ENCODE measurements at regions of chr2 and their contacts with region 1.

Region 1: GRCh38 chr2:153519257-153519875 is 40.8 kb upstream of the RPRM start:
- DNase-seq: peak in 7 of 10 donors; percentile 28 to 79 (median 52)
- H3K4me3 ChIP-seq: no peak overlapping the region
- H3K27ac ChIP-seq: no peak overlapping the region
- H3K27me3 ChIP-seq: peaks cover 0 to 8% (median 0%) of the 10 kb centered on the region in 45 donors
- CTCF ChIP-seq: peak; percentile 78 to 100 (median 92)

Region 2: DNA sequence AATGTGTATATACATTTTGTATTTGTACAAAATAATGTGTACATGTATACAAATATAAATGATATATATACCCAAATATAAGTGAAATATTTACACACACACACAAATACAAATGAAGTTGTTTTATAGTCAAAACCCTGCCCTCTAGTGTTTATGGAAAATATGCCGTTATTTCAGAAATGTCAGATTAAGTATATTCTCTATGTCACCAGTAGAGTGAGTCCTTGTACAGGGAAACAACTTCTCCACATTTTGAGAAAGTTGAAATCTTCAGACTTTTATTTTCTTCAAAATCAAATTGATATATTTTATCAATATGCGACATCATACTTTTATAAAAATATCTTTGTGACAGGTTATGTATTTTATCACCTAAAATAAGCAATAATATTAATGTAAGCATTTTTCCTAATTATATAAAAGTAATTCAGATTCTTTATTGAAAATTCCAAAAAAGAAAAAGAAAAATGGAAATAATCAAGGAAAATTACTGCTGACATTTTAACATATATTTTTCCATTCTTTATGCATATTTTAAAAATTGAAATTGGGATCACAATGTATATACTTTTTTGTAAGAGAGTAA is 778.5 kb before region 1 on chr2:
- intact Hi-C with region 1: loop called (anchors 5 to 10 kb)
- DNase-seq: no peak
- H3K4me3 ChIP-seq: no peak overlapping the region
- H3K27ac ChIP-seq: no peak overlapping the region
- H3K27me3 ChIP-seq: no peaks in the 10 kb centered on the region
- CTCF ChIP-seq: peak; percentile 75 to 97 (median 90)

Region 3: GRCh38 chr2:153455403-153455802 is 64.0 kb before region 1 on chr2:
- intact Hi-C with region 1: no loop called
- DNase-seq: no peak
- H3K4me3 ChIP-seq: no peak overlapping the region
- H3K27ac ChIP-seq: no peak overlapping the region
- H3K27me3 ChIP-seq: peaks cover 0 to 23% (median 2%) of the 10 kb centered on the region in 45 donors
- CTCF ChIP-seq: no peak